Activated CD8-positive, alpha-beta memory T cell treated with anti-CD3 and anti-CD28 coated beads, Interleukin-2, amount 10 ng/mL, durations not matched to agents 7 days and 5 days (primary cell): ENCODE measurements at regions of chr1 and their contacts with region 1.

Region 1: DNA sequence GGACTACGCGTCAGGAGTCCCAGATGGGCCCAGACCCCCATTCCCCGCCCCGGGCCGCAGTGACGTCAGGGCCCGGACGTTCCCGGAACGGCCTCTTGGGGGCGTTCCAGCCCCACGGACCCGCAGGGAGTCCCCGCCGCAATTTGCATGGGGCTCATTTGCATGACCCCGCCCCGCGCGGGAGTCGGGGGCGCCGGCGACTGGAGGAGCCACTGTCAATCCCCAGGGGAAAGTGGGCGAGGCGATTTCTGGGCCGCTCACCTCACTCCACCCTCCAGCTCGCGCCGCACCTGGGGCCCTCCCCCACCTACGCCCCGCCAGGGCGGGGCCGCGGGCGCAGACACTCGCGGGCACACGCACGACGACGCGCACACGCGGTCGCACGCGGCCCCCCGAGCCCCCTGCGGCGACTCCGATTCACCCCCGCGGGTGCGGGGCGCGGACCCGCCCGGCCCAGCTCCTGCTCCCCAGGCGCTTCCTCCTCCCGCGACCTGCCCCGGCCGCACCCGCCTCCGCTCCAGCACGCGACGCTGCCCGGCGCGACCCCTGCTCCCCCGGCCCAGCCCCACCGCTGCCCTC is 13.2 kb downstream of the AGRN start:
- DNase-seq: peak; percentile 94
- ATAC-seq: peak; percentile 94
- H3K4me3 Mint-ChIP-seq: no peak overlapping the region
- H3K27ac Mint-ChIP-seq: no peak overlapping the region
- H3K4me1 Mint-ChIP-seq: peaks cover 12% of the 10 kb centered on the region
- H3K27me3 Mint-ChIP-seq: peaks cover 16% of the 10 kb centered on the region

Region 2: GRCh38 chr1:975896-976683 is 57.0 kb before region 1 on chr1:
- CTCF ChIA-PET with region 1: no interaction called
- DNase-seq: no peak
- ATAC-seq: peak; percentile 68
- H3K4me3 Mint-ChIP-seq: no peak overlapping the region
- H3K27ac Mint-ChIP-seq: no peak overlapping the region
- H3K4me1 Mint-ChIP-seq: peaks cover 6% of the 10 kb centered on the region
- H3K27me3 Mint-ChIP-seq: peaks cover 4% of the 10 kb centered on the region

Region 3: DNA sequence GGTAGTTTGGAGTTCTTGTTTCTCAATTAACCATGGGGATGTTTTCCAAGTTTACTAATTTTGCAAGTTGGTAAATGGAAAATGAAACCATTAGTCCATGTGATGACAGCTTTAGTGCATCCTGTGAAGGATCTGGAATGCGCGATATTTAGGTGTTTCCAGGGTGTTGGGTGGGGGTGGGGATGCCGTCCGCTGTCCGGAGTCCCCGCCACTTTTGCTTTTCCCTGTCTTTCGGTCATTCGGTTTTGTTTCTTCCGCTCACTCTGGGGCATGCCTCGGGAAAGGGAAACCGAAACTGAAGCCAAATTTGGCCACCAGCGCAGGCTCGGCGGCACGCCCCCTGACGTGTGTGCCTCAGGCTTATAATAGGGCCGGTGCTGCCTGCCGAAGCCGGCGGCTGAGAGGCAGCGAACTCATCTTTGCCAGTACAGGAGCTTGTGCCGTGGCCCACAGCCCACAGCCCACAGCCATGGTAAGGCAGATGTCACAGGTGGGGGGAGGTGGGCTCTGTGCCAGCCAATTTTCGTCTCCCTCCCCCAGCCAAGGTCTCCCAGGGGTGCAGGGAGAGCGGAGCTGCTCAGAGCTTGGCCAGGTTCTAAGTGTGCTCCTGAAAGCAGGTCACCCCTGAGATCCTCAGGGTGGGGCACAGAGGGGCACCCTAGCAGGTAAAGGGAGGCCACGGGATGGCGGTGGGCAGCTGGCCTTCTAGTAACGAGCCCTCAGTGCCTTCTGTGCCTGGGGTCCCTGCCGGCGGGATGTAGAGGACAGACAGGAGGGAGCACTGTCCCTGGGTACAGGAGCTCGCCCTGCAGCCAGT is 19.8 kb before region 1 on chr1 and contains the start of gene ISG15:
- CTCF ChIA-PET with region 1: interaction called, 20 read pairs
- DNase-seq: peak; percentile 96
- ATAC-seq: peak; percentile 91
- H3K4me3 Mint-ChIP-seq: peak within 1 kb of the TSS; percentile 99
- H3K27ac Mint-ChIP-seq: peak within 1 kb of the TSS; percentile 95
- H3K4me1 Mint-ChIP-seq: peaks cover 37% of the 10 kb centered on the region
- H3K27me3 Mint-ChIP-seq: peaks cover 9% of the 10 kb centered on the region
- total RNA-seq, gene ISG15: 432 to 986 TPM

Region 4: DNA sequence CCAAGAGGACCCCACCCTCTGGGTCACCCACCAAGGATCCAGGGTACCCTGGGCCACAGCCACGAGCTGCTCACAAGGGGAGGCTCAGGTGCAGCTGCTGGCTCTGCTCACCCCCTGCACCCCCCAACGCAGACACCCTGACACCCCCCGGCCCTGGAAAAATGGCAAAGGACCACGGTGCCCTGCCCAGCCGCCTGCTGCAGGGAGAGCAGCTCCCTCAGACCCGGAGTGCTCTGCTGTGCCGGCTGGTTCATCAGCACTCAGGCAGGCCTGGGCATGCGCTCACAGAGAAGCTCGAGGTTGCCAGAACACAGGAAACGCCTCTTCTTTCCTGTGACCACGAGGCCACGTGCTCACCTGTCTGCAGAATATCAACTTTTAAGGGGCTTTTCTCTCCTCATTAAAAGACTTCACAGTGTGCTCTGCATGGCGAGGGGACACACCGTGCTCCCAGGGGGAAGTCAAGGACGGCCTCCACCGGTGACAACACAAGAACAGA is 217.7 kb after region 1 on chr1:
- CTCF ChIA-PET with region 1: interaction called, 10 read pairs
- DNase-seq: peak; percentile 88
- ATAC-seq: peak; percentile 97
- H3K4me3 Mint-ChIP-seq: no peak overlapping the region
- H3K27ac Mint-ChIP-seq: peak overlapping the region; percentile 81
- H3K4me1 Mint-ChIP-seq: peaks cover 14% of the 10 kb centered on the region
- H3K27me3 Mint-ChIP-seq: peaks cover 3% of the 10 kb centered on the region